Left colon (tissue), 2 donors: ENCODE measurements at regions of chr11 and their contacts with region 1.

Region 1: GRCh38 chr11:107573438-107573837 is 7.9 kb upstream of the ALKBH8 start:
- DNase-seq: no peak
- ATAC-seq: no peak

Region 2: GRCh38 chr11:107623183-107623582 is 49.7 kb after region 1 on chr11:
- intact Hi-C with region 1: no loop called
- DNase-seq: no peak
- ATAC-seq: no peak

Region 3: DNA sequence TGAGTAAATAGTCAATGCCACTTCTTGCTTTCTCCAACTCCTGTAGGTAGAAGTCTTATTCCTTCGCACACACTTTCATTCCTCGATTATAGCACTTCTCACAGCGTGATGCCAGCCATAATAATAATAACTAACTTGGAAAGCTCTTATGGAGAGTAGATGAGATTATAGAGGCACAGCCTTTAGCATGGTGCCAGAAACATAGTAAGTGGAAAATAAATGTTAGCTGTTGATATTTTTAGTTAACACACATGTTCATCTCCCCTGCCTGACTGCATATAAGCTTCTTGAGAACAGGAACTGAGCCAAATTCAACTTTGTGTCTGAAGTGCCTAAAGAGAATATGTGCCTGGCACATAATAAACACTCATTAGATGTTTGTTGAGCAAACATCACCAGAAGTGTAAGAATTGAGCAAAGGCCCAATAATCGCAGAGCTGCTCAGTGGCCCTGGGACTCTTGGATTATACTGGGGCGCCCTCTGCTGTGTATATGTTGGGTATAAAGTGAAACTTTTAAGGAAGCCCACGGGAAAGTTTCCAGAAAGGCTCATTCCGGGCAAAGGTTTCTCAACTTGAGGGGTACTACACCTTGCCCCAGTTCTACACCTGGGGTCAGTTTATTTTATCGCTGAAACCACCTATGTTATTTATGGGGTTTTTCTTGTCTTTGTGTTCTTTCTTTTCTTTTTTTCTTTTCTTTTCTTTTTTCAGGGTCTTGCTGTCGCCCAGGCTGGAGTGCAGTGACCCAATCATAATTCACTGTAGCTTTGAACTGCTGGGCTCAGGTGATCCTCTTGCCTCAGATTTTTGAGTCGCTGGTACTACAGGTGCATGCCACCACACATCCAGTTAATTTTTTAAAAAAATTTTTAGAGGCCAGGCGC is 116.1 kb after region 1 on chr11:
- intact Hi-C with region 1: loop called in 1 of 2 experiments (anchors 5 kb)
- DNase-seq: peak in 1 of 2 donors; percentile 77
- ATAC-seq: peak; percentile 77

Region 4: DNA sequence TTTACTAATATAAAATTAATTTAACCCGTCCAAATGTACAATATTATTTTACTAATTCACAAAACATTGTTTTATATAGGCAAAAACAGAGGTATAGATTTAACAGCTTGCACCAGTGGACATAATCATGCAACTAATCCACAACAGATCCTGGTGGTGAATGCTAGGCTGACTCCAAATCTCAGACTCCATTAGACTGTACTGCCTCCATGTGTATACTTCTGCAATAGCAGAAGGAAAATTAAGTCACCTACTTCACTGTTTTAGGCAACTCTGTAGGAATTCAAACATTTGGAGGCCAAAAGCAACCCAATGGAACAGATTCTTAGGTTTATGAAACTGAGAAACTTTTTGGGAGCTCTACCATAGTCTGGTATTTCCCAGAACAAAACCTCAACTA is 324.8 kb after region 1 on chr11:
- intact Hi-C with region 1: loop called in 1 of 2 experiments (anchors 10 kb)
- DNase-seq: no peak
- ATAC-seq: peak; percentile 81